Dendritic cell treated with granulocyte-macrophage colony-stimulating factor and Interleukin-4, amounts not matched to agents 40 ng/mL and 50 ng/mL, for 4 days (primary cell): ENCODE measurements at regions of chr11 and their contacts with region 1.

Region 1: GRCh38 chr11:113305440-113306336 is 8.7 kb upstream of the TTC12 start:
- H3K4me3 Mint-ChIP-seq: no peak overlapping the region
- H3K27ac Mint-ChIP-seq: no peak overlapping the region
- H3K4me1 Mint-ChIP-seq: no peaks in the 10 kb centered on the region
- H3K27me3 Mint-ChIP-seq: peaks cover 12% of the 10 kb centered on the region

Region 2: DNA sequence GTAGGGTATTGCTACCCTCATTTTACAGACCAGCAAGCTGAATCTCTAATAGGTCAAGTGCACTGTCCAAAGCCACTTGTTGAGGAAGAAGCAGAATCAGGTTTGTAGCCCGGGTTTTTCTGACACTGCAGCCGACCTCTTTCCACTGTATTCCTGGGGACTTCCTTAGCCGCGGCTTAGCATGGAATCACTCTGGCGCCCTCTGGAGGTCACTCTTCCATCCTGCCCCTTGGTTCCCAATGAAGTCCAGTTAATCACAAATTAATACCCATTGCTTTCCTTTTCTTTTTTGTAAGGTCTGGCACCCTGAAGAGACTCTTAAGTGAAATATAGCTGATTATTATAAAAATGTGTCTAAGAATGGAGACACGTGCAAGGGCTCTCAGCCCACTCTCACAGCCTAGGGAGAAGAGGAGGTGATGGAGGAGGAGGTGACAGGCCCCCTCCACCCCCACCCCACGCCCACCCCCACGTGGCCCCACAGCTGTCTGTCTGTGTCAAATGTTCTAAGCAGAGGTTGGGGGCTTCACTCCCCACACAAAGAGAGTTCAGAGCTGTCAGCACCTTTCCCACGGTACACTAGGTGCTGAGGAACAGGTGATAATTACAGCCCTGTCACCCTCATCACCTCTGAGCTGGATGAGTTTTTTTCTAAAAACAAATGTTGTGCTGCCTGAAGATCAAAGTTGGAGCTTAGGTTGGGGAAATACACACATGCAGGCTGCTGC is 227.2 kb after region 1 on chr11:
- intact Hi-C with region 1: loop called (anchors 1 kb)
- H3K4me3 Mint-ChIP-seq: no peak overlapping the region
- H3K27ac Mint-ChIP-seq: no peak overlapping the region
- H3K4me1 Mint-ChIP-seq: no peaks in the 10 kb centered on the region
- H3K27me3 Mint-ChIP-seq: peaks cover 9% of the 10 kb centered on the region

Region 3: DNA sequence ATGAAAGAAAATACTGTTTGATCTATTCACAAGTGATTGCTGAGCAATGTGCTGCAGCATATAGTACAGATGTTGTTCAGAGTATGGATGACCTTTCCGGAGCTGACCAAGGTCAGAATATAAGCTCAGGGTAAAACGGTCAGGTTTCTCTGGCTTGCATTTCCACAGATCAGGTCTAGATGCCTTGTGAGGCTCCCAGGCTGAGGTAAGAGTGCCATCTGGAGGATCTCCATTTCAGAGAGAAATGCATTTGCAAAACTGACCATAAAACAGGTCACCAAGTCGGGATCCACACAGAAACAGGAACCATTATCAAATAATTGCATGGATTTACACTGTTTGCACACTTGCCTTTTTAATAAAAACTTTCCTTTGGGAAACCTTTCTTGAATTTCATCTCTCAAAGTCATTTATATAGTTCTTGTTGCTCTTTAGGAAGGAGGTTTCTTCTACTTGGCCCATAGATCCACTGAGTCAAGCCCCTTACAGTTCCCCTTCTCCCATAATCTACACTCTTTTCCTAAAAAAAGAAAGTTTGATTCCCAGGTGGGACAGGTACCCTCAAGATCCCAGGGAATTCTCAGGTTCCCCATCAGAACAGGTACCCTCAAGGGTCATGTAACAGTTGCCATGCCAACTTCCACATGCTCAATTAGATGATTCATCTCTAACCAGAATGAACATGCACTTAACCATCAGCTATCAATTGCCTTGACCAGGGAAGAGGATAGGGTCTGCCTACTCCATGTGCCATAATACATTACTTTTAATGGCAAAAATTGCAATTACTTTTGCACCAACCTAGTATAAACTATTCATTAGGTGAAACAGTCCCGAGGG is 425.4 kb after region 1 on chr11:
- intact Hi-C with region 1: loop called (anchors 2 kb)
- H3K4me3 Mint-ChIP-seq: no peak overlapping the region
- H3K27ac Mint-ChIP-seq: no peak overlapping the region
- H3K4me1 Mint-ChIP-seq: peaks cover 15% of the 10 kb centered on the region
- H3K27me3 Mint-ChIP-seq: no peaks in the 10 kb centered on the region

Region 4: DNA sequence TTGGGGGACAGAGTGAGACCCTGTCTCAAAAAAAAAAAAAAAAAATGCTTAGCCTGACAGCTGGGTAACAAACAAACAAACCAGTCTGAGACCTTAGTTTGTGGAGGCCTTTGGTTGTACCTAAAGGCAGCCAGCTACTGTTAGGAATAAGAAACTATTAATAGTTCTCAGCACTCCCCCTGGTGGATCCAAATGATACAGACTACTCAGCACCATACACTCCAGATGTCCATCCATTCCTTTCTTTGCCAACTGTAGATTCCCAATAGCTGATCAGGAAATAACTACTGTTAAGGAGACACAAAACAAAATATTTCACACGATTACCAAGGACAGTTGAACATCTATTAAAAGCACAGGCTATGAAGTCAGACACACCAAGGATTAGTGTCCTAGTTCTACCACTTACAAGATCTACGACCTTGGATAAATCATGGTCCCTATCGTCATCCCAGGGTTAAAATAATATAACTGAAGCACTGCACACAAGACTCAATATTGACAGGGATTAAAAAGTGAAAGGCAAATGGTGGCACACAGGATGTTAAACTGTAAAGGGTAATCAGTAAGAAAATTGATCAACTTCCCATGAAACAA is 491.1 kb after region 1 on chr11:
- intact Hi-C with region 1: loop called (anchors 2 kb)
- H3K4me3 Mint-ChIP-seq: no peak overlapping the region
- H3K27ac Mint-ChIP-seq: no peak overlapping the region
- H3K4me1 Mint-ChIP-seq: no peaks in the 10 kb centered on the region
- H3K27me3 Mint-ChIP-seq: no peaks in the 10 kb centered on the region